Heart left ventricle (tissue), 16 donors: ENCODE measurements at regions of chr6 and their contacts with region 1.

Region 1: GRCh38 chr6:149431905-149432775 is 32.1 kb downstream of the SUMO4 start:
- DNase-seq: peak; percentile 86 to 92 (median 89)
- ATAC-seq: peak; percentile 81 to 96 (median 90)
- H3K4me3 ChIP-seq: peak overlapping the region in 2 of 12 donors; percentile 10 to 13
- H3K27ac ChIP-seq: no peak overlapping the region
- H3K4me1 ChIP-seq: peaks cover 0 to 7% (median 0%) of the 10 kb centered on the region in 12 donors
- H3K27me3 ChIP-seq: peaks cover 0 to 12% (median 0%) of the 10 kb centered on the region in 9 donors
- CTCF ChIP-seq: peak; percentile 86 to 98 (median 93)
- POLR2A ChIP-seq: no peak

Region 2: GRCh38 chr6:148578245-148578732 is 853.9 kb before region 1 on chr6:
- intact Hi-C with region 1: loop called in 1 of 10 experiments (anchors 10 kb)
- DNase-seq: peak; percentile 73 to 87 (median 84)
- ATAC-seq: peak; percentile 96 to 100 (median 100)
- H3K4me3 ChIP-seq: no peak overlapping the region
- H3K27ac ChIP-seq: no peak overlapping the region
- H3K4me1 ChIP-seq: peaks cover 0 to 5% (median 0%) of the 10 kb centered on the region in 12 donors
- H3K27me3 ChIP-seq: peaks cover 0 to 5% (median 0%) of the 10 kb centered on the region in 9 donors
- CTCF ChIP-seq: peak; percentile 55 to 95 (median 78)
- POLR2A ChIP-seq: no peak

Region 3: GRCh38 chr6:149028767-149029405 is 403.3 kb before region 1 on chr6:
- intact Hi-C with region 1: loop called (anchors 1 to 5 kb)
- DNase-seq: peak in 4 of 5 donors; percentile 30 to 80 (median 62)
- ATAC-seq: peak; percentile 35 to 75 (median 70)
- H3K4me3 ChIP-seq: no peak overlapping the region
- H3K27ac ChIP-seq: no peak overlapping the region
- H3K4me1 ChIP-seq: peaks cover 0 to 18% (median 0%) of the 10 kb centered on the region in 12 donors
- H3K27me3 ChIP-seq: no peaks in the 10 kb centered on the region
- CTCF ChIP-seq: peak; percentile 64 to 91 (median 80)
- POLR2A ChIP-seq: no peak

Region 4: GRCh38 chr6:149082286-149082707 is 349.8 kb before region 1 on chr6:
- intact Hi-C with region 1: loop called (anchors 1 to 5 kb)
- DNase-seq: peak; percentile 70 to 88 (median 76)
- ATAC-seq: peak in 3 of 4 donors; percentile 57 to 73 (median 69)
- H3K4me3 ChIP-seq: no peak overlapping the region
- H3K27ac ChIP-seq: no peak overlapping the region
- H3K4me1 ChIP-seq: peaks cover 0 to 21% (median 14%) of the 10 kb centered on the region in 12 donors
- H3K27me3 ChIP-seq: no peaks in the 10 kb centered on the region
- CTCF ChIP-seq: peak; percentile 70 to 89 (median 80)
- POLR2A ChIP-seq: no peak

Region 5: GRCh38 chr6:149306967-149307366 is 125.2 kb before region 1 on chr6:
- intact Hi-C with region 1: loop called in 4 of 10 experiments (anchors 10 kb)
- DNase-seq: no peak
- ATAC-seq: no peak
- H3K4me3 ChIP-seq: no peak overlapping the region
- H3K27ac ChIP-seq: no peak overlapping the region
- H3K4me1 ChIP-seq: no peaks in the 10 kb centered on the region
- H3K27me3 ChIP-seq: no peaks in the 10 kb centered on the region
- CTCF ChIP-seq: no peak
- POLR2A ChIP-seq: no peak

Region 6: DNA sequence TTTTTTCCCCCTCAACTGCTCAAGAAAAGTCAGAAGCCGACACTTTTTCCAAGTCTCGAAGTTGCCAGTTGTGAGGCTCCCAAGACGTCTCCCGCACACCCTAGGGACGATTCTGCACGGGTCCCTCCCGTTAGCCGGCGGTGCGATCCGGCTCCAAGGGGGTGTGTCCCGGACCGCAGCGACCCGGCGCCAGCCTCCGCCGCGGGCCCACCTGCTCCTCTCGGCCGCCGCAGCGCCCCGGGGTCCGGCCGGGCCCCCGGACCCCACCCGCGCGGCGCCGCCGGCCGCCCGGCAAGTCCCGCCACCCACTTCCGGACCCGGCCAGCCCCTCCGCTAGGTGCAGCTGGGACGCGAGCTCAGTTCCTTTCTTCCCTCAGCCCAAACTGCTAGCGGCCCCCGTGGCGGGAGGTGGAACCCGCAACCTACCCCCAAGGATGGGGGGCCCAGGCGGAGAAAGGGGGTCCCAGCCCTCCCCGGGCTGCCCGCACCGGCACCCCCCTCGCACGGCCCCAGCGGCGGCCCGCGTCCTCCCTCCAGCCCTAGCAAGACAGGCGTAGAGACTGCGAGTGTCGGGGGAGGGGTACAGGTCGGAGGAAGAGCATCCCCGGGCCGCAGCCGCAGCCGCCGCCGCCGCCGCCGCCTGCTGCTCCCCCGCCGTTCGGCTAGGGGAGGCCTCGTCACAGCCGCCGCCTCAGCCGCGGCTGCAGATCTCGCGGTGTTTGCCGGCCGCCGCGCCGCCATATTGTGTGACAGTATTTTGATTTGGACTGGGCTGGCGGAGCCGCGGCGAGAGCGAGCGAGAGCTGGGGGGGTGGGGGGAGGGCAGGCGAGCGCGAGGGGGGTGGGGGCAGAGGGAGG is 115.1 kb before region 1 on chr6:
- intact Hi-C with region 1: loop called in 3 of 10 experiments (anchors 10 kb)
- DNase-seq: peak; percentile 90 to 95 (median 93)
- ATAC-seq: peak; percentile 90 to 97 (median 96)
- H3K4me3 ChIP-seq: peak overlapping the region; percentile 85 to 99 (median 93)
- H3K27ac ChIP-seq: peak overlapping the region; percentile 87 to 99 (median 96)
- H3K4me1 ChIP-seq: peaks cover 0 to 40% (median 20%) of the 10 kb centered on the region in 12 donors
- H3K27me3 ChIP-seq: peaks cover 0 to 4% (median 0%) of the 10 kb centered on the region in 9 donors
- CTCF ChIP-seq: peak in 2 of 12 donors; percentile 7 to 13
- POLR2A ChIP-seq: peak; percentile 23 to 72

Region 7: GRCh38 chr6:149513915-149514314 is 81.8 kb after region 1 on chr6:
- intact Hi-C with region 1: loop called in 6 of 10 experiments (anchors 2 to 10 kb)
- DNase-seq: no peak
- ATAC-seq: peak in 2 of 4 donors; percentile 42 to 48
- H3K4me3 ChIP-seq: no peak overlapping the region
- H3K27ac ChIP-seq: no peak overlapping the region
- H3K4me1 ChIP-seq: peaks cover 0 to 7% (median 0%) of the 10 kb centered on the region in 12 donors
- H3K27me3 ChIP-seq: no peaks in the 10 kb centered on the region
- CTCF ChIP-seq: no peak
- POLR2A ChIP-seq: no peak